Naive thymus-derived CD8-positive, alpha-beta T cell (primary cell): ENCODE measurements at regions of chr12 and their contacts with region 1.

Region 1: GRCh38 chr12:110449799-110450497 is at the start of gene ARPC3:
- DNase-seq: peak; percentile 91 to 97 (median 94)
- ATAC-seq: peak; percentile 93 to 94
- H3K4me3 Mint-ChIP-seq: peak within 1 kb of the TSS; percentile 98 to 100 (median 100)
- H3K27ac Mint-ChIP-seq: peak within 1 kb of the TSS; percentile 98 to 100 (median 99)
- H3K4me1 Mint-ChIP-seq: peaks cover 22 to 50% (median 41%) of the 10 kb centered on the region in 4 donors
- H3K27me3 Mint-ChIP-seq: no peaks in the 10 kb centered on the region
- polyA plus RNA-seq, gene ARPC3: 691 to 810 (median 733) TPM

Region 2: DNA sequence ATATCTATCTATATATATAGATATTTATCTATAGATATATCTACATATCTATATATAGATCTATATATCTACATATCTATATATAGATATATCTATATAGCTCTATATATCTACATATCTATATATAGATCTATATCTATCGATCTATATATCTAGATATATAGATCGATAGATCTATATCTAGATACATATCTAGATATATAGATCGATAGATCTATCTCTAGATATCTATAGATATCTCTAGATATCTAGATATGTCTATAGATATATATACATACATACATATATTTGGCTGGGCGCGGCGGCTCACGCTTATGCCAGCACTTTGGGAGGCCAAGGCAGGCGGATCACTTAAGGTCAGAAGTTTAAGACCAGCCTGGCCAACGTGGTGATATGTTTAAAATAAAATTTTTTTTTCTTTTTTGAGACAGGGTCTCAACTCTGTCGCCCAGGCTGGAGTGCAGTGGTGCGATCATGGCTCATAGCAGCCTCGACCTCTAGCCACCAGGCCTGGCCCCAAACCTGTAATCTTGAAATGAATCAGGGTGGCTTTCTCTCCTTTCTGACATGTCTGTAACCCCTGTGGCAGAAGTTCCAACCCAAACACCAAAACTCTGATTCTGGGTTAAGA is 17.9 kb before region 1 on chr12:
- POLR2A ChIA-PET with region 1: interaction called, 24 read pairs
- DNase-seq: no peak
- ATAC-seq: no peak
- H3K4me3 Mint-ChIP-seq: peak overlapping the region in 1 of 10 donors; percentile 100
- H3K27ac Mint-ChIP-seq: peak overlapping the region in 4 of 10 donors; percentile 34 to 99 (median 68)
- H3K4me1 Mint-ChIP-seq: peaks cover 0 to 5% (median 1%) of the 10 kb centered on the region in 4 donors
- H3K27me3 Mint-ChIP-seq: no peaks in the 10 kb centered on the region

Region 3: DNA sequence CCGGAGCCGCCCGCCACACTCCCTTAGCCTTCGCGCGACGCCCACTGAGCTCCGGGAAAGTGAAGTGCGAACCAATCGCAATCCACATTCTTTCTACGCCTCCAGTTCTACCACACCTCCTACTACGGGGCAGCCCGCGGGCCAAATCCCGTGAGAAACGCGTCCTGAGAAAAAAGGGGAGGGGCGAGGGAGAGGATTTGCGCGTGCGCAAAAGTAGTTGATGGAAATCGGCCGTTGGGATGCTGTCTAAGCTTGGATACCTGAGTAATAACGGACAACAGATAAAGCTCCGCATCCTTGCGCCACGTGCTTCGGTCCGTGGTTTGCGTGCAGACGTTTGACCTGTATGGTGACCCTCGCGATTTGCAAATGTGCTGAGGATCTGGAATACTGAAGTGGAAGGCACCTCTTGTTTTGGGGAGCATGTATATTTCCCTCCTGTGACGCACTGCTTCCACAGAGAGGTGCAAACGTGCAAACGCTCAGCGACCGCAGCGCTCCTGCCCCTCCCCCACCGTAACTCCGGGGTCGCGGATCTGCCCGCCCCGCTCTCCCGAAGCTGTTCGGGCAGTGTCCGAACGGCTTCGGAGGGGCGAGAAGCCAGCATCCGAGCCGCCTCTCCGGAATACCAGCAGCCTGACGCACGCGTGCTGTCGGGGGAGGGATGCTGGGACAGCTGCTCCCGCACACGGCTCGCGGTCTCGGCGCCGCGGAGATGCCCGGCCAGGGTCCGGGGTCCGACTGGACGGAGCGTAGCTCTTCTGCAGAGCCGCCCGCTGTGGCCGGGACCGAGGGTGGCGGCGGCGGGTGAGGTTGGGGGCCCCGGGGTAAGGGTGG is 18.5 kb after region 1 on chr12 and contains the starts of genes FAM216A and GPN3:
- POLR2A ChIA-PET with region 1: interaction called, 55 read pairs
- DNase-seq: peak; percentile 85 to 99 (median 95)
- ATAC-seq: peak; percentile 85 to 86
- H3K4me3 Mint-ChIP-seq: peak within 1 kb of the TSS; percentile 87 to 100 (median 99)
- H3K27ac Mint-ChIP-seq: peak within 1 kb of the TSS; percentile 94 to 99 (median 96)
- H3K4me1 Mint-ChIP-seq: peaks cover 14 to 45% (median 43%) of the 10 kb centered on the region in 4 donors
- H3K27me3 Mint-ChIP-seq: no peaks in the 10 kb centered on the region
- polyA plus RNA-seq, gene FAM216A: 9.3 to 15.4 (median 11.1) TPM
- polyA plus RNA-seq, gene GPN3: 33.7 to 35.8 (median 34.4) TPM

Region 4: DNA sequence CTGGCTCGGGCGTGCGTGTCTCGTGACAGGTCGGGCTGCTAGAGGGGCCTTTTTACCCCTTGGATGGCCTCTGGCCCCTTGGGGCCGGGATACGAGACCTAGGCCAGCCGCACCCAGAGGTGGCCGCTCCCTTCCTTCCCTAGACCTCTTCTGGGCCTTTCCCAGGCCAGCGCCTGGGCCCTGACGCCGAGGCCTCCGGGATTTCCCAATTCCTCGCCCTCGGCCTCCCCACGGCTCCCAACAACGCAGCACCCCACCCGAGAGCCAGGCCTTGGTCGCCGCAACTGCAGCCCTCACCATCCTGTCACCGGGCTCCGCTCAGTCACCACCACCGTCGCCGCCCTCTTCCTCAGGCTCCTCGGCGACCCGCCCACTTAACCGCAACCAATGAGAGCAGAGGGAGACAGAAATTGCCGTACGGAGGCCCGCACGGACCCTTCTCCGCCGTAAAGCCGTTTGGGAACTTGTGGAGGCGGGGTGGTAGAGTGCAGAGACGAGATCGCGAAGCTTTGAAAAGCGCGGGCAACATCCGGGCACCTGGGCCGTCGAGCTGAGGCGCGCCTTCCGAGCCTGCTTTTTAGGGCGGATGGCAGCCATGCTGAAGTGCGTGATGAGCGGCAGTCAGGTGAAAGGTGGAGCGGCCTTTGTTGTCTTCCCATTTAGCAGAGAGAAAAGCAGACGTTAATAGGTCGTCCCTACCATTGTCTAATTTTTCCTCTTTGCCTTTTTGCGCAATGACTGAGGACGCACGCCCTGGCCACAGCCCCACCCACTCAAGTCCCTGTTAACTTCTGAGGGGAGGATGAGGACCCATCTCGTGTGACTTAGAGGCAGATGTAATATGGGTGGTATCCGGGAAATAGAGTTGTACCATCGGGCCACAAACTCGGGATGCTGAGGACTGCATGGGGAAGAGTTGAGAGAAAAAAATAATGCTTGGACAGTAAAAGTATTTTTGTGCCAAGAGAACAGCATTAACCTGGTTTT is 52.1 kb after region 1 on chr12 and contains the starts of genes RAD9B and VPS29:
- POLR2A ChIA-PET with region 1: interaction called, 26 read pairs
- DNase-seq: peak; percentile 96 to 100 (median 99)
- ATAC-seq: peak; percentile 92 to 95
- H3K4me3 Mint-ChIP-seq: peak within 1 kb of the TSS; percentile 94 to 99 (median 96)
- H3K27ac Mint-ChIP-seq: peak within 1 kb of the TSS; percentile 92 to 99 (median 97)
- H3K4me1 Mint-ChIP-seq: peaks cover 16 to 45% (median 39%) of the 10 kb centered on the region in 4 donors
- H3K27me3 Mint-ChIP-seq: peaks cover 0 to 3% (median 0%) of the 10 kb centered on the region in 5 donors
- polyA plus RNA-seq, gene RAD9B: 0.89 to 1.3 (median 1.0) TPM
- polyA plus RNA-seq, gene VPS29: 128 to 167 (median 167) TPM

Region 5: GRCh38 chr12:110583137-110584059 is 133.4 kb after region 1 on chr12 and contains the start of gene PPTC7:
- POLR2A ChIA-PET with region 1: interaction called, 11 read pairs
- DNase-seq: peak; percentile 86 to 98 (median 94)
- ATAC-seq: peak; percentile 89 to 94
- H3K4me3 Mint-ChIP-seq: peak within 1 kb of the TSS; percentile 89 to 97 (median 94)
- H3K27ac Mint-ChIP-seq: peak within 1 kb of the TSS; percentile 90 to 98 (median 95)
- H3K4me1 Mint-ChIP-seq: peaks cover 16 to 67% (median 63%) of the 10 kb centered on the region in 4 donors
- H3K27me3 Mint-ChIP-seq: no peaks in the 10 kb centered on the region
- polyA plus RNA-seq, gene PPTC7: 7.6 to 10.2 (median 9.6) TPM

Region 6: GRCh38 chr12:110600254-110600653 is 150.3 kb after region 1 on chr12:
- POLR2A ChIA-PET with region 1: interaction called, 41 read pairs
- DNase-seq: peak in 3 of 10 donors; percentile 57 to 61 (median 60)
- ATAC-seq: peak; percentile 48 to 58
- H3K4me3 Mint-ChIP-seq: no peak overlapping the region
- H3K27ac Mint-ChIP-seq: peak overlapping the region in 6 of 10 donors; percentile 15 to 85 (median 35)
- H3K4me1 Mint-ChIP-seq: peaks cover 4 to 32% (median 10%) of the 10 kb centered on the region in 4 donors
- H3K27me3 Mint-ChIP-seq: no peaks in the 10 kb centered on the region

Region 7: DNA sequence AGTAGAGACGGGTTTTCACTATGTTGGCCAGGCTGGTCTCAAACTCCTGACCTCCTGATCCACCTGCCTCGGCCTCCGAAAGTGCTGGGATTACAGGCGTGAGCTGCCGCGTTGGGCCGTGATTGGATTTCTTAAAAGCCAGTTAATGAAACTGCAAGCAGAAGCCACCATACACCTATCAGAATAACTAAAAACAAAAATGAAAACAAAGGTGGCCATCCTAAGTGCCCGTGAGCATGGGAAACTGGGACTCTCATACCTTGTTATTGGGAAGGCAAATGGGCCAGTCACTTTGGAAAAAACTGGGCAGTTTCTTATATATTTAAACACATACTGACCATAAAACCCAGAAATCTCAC is 156.3 kb after region 1 on chr12:
- POLR2A ChIA-PET with region 1: interaction called, 41 read pairs
- DNase-seq: no peak
- ATAC-seq: no peak
- H3K4me3 Mint-ChIP-seq: peak overlapping the region; percentile 77 to 94 (median 86)
- H3K27ac Mint-ChIP-seq: peak overlapping the region; percentile 88 to 98 (median 93)
- H3K4me1 Mint-ChIP-seq: peaks cover 0 to 51% (median 8%) of the 10 kb centered on the region in 4 donors
- H3K27me3 Mint-ChIP-seq: no peaks in the 10 kb centered on the region